GM12878 (cell line): ENCODE measurements at regions of chr5 and their contacts with region 1.

Region 1: GRCh38 chr5:134592141-134592746 is 40.4 kb downstream of the SAR1B start:
- DNase-seq: no peak
- ATAC-seq: peak; percentile 69
- H3K4me3 ChIP-seq: no peak overlapping the region
- H3K27ac ChIP-seq: peak overlapping the region; percentile 31; the same call in 1 of the 2 replicates
- H3K4me1 ChIP-seq: peaks cover 28% of the 10 kb centered on the region
- H3K27me3 ChIP-seq: no peaks in the 10 kb centered on the region
- CTCF ChIP-seq: no peak
- EP300 ChIP-seq: peak in 1 of 2 experiments; percentile 39; a peak in 1 of 4 replicates
- POLR2A ChIP-seq: no peak
- RAD21 ChIP-seq: no peak

Region 2: DNA sequence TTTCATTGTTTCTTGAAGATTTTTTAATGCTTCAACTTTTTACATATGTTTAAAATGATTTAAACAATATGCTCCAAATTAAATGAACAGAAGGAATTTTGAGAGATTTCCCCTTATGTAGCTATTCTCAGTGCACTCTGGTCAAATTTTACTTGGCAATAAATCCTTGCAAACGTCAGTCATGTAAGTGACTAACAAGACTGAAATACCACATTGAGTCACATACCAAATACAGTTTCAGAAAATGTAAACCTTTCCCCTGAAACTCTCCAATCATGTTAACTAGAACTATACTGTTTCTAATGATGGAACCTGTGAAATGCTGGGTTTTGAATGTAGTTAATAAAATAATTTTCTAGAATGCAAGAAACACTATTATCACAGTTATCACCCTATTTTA is 10.8 kb after region 1 on chr5:
- CTCF ChIA-PET with region 1: interaction called, 38 read pairs
- POLR2A ChIA-PET with region 1: interaction called, 7 read pairs
- RAD21 ChIA-PET with region 1: interaction called, 26 read pairs
- SMC1A ChIA-PET with region 1: interaction called, 26 read pairs
- in situ Hi-C with region 1: no loop called
- intact Hi-C with region 1: no loop called
- DNase-seq: no peak
- ATAC-seq: peak; percentile 91
- H3K4me3 ChIP-seq: no peak overlapping the region
- H3K27ac ChIP-seq: no peak overlapping the region
- H3K4me1 ChIP-seq: peaks cover 10% of the 10 kb centered on the region; the same call in 1 of the 2 replicates
- H3K27me3 ChIP-seq: no peaks in the 10 kb centered on the region
- CTCF ChIP-seq: no peak
- EP300 ChIP-seq: no peak
- POLR2A ChIP-seq: no peak
- RAD21 ChIP-seq: no peak

Region 3: GRCh38 chr5:134609232-134609851 is 17.1 kb after region 1 on chr5:
- CTCF ChIA-PET with region 1: interaction called, 38 read pairs
- POLR2A ChIA-PET with region 1: interaction called, 7 read pairs
- RAD21 ChIA-PET with region 1: interaction called, 26 read pairs
- SMC1A ChIA-PET with region 1: interaction called, 26 read pairs
- in situ Hi-C with region 1: no loop called
- intact Hi-C with region 1: no loop called
- DNase-seq: peak; percentile 41
- ATAC-seq: peak; percentile 83
- H3K4me3 ChIP-seq: no peak overlapping the region; the same call in 1 of the 2 replicates
- H3K27ac ChIP-seq: peak overlapping the region; percentile 68
- H3K4me1 ChIP-seq: peaks cover 17% of the 10 kb centered on the region
- H3K27me3 ChIP-seq: no peaks in the 10 kb centered on the region
- CTCF ChIP-seq: no peak
- EP300 ChIP-seq: no peak
- POLR2A ChIP-seq: no peak
- RAD21 ChIP-seq: no peak

Region 4: GRCh38 chr5:134648425-134649162 is 56.4 kb after region 1 on chr5 and contains the start of gene SEC24A:
- CTCF ChIA-PET with region 1: interaction called, 13 read pairs
- POLR2A ChIA-PET with region 1: interaction called, 10 read pairs
- RAD21 ChIA-PET with region 1: interaction called, 5 read pairs
- SMC1A ChIA-PET with region 1: interaction called, 7 read pairs
- in situ Hi-C with region 1: no loop called
- intact Hi-C with region 1: loop called (anchors 5 kb)
- DNase-seq: no peak
- ATAC-seq: peak; percentile 89
- H3K4me3 ChIP-seq: peak within 1 kb of the TSS; percentile 100
- H3K27ac ChIP-seq: peak within 1 kb of the TSS; percentile 98
- H3K4me1 ChIP-seq: peaks cover 18% of the 10 kb centered on the region
- H3K27me3 ChIP-seq: no peaks in the 10 kb centered on the region
- CTCF ChIP-seq: no peak
- EP300 ChIP-seq: peak in 1 of 2 experiments; percentile 40; a peak in 1 of 4 replicates
- POLR2A ChIP-seq: peak; percentile 91
- RAD21 ChIP-seq: no peak
- polyA plus RNA-seq, gene SEC24A: 7.1 to 12.5 TPM